ENCODE measurements at regions of chr14 and their contacts with region 1.

Region 1: GRCh38 chr14:89899917-89900663 is 54.4 kb downstream of the EFCAB11 start:
- DNase-seq: peak in 2 of 4 experiments; percentile 3 to 4
- ATAC-seq: peak; percentile 55; the same call in 1 of the 3 replicates
- H3K4me3 ChIP-seq: no peak overlapping the region
- H3K27ac ChIP-seq: no peak overlapping the region
- H3K4me1 ChIP-seq: no peaks in the 10 kb centered on the region
- H3K27me3 ChIP-seq: no peaks in the 10 kb centered on the region
- CTCF ChIP-seq: peak in 2 of 3 experiments; percentile 21 to 30; a peak in 1 of 6 replicates
- EP300 ChIP-seq: no peak
- POLR2A ChIP-seq: no peak
- RAD21 ChIP-seq: peak; percentile 44 to 48

Region 2: DNA sequence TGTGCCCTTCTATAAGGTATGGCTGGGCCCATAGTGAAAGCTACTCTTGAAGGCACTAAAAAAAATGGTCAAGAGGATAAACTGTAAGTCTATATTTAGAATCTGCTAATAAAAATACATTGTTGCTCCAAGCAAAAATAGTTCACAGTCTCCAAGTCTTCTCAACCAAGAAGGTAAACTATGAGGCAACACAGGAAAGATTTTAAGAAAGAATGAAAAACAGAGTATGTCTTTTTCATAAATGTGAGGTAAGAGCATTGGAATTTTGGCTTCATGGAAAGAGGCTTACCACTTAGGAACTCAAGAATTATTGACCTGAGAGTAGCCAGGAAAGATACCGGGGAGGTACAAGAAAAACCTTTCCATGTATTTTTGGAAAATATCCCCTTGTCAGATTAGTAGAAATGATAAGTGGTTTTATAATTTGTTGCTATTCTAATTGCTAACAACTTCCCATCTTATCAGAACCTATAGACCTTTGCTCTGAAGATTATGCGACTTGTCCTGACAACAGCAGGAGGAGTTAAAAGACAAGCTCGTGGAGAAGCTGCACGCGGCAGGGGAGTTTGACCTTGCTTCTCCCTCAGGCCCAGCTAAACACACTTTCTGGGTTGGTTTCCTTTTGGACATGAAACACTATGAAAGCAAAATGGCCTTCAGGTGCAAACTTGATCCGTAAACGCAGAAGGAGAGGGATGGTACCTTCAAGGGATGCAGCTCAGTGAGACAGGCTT is 721.1 kb before region 1 on chr14:
- CTCF ChIA-PET with region 1: interaction called, 10 read pairs
- POLR2A ChIA-PET with region 1: no interaction called
- in situ Hi-C with region 1: no loop called
- intact Hi-C with region 1: no loop called
- DNase-seq: no peak
- ATAC-seq: no peak
- H3K4me3 ChIP-seq: no peak overlapping the region
- H3K27ac ChIP-seq: no peak overlapping the region
- H3K4me1 ChIP-seq: no peaks in the 10 kb centered on the region; a peak in 1 of 5 replicates
- H3K27me3 ChIP-seq: peaks cover 2 to 27% of the 10 kb centered on the region in 2 experiments; a peak in 4 of 5 replicates
- CTCF ChIP-seq: no peak
- EP300 ChIP-seq: no peak
- POLR2A ChIP-seq: no peak
- RAD21 ChIP-seq: no peak

Region 3: GRCh38 chr14:89349171-89350008 is 550.7 kb before region 1 on chr14:
- CTCF ChIA-PET with region 1: no interaction called
- POLR2A ChIA-PET with region 1: no interaction called
- in situ Hi-C with region 1: no loop called
- intact Hi-C with region 1: no loop called
- DNase-seq: no peak
- ATAC-seq: no peak
- H3K4me3 ChIP-seq: no peak overlapping the region
- H3K27ac ChIP-seq: no peak overlapping the region
- H3K4me1 ChIP-seq: no peaks in the 10 kb centered on the region
- H3K27me3 ChIP-seq: peaks cover 0 to 14% of the 10 kb centered on the region in 2 experiments; a peak in 2 of 5 replicates
- CTCF ChIP-seq: no peak
- EP300 ChIP-seq: no peak
- POLR2A ChIP-seq: no peak
- RAD21 ChIP-seq: no peak

Measured in K562 (cell line).